ENCODE measurements at regions of chr10 and their contacts with region 1.

Region 1: GRCh38 chr10:102713814-102714620 is at the start of gene ARL3:
- DNase-seq: peak; percentile 97 to 98
- ATAC-seq: peak; percentile 96
- total RNA-seq, gene ARL3: 2.5 to 4.2 TPM

Region 2: GRCh38 chr10:102503281-102504220 is 210.5 kb before region 1 on chr10 and contains the start of gene SUFU:
- intact Hi-C with region 1: loop called in 1 of 2 experiments (anchors 5 kb)
- DNase-seq: peak; percentile 97 to 99
- ATAC-seq: peak; percentile 74
- total RNA-seq, gene SUFU: 8.0 to 9.3 TPM

Region 3: DNA sequence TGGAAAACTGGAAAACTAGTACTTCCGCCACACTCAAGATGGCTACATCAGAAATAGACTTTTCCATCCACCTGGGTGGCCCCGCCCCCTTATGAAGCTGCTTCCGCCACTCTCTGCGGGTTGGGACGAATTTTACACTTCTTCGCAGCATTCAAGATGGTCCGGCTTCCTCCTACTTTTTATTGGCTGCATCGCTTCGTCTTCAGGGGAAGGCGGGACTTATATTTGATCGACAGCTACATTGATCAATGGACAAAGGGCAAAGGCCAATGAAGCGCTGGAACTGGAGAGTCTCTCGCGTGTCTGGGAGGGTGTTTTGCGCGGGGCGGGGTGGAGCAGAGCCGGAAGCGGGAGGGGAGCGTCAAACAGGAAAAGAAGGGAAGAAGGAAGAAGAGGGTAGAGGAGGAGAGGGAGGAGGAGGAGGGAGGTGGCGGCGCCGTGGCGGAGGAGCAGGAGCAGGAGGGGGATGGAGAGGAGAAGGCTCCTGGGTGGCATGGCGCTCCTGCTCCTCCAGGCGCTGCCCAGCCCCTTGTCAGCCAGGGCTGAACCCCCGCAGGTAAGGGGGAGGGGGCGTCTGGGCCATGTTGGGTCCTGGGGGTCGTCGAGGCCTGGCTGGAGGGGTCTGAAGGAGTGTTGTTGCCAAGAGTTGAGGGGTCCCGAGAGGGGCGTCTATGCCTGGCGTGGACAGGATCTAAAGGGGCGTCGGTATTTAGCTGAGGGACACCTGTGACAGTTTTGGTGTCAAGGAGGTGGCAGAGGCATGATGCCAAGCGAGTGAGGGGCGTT is 29.8 kb after region 1 on chr10 and contains the start of gene WBP1L:
- intact Hi-C with region 1: loop called in 1 of 2 experiments (anchors 2 kb)
- DNase-seq: peak; percentile 97 to 99
- ATAC-seq: peak; percentile 97
- total RNA-seq, gene WBP1L: 37.8 to 47.8 TPM